Activated CD4-positive, alpha-beta T cell treated with anti-CD3 and anti-CD28 coated beads for 36 hours (primary cell): ENCODE measurements at regions of chr1 and their contacts with region 1.

Region 1: GRCh38 chr1:246506674-246507481 is at the start of gene SMYD3:
- DNase-seq: peak; percentile 84
- ATAC-seq: peak; percentile 93
- H3K4me3 Mint-ChIP-seq: peak within 1 kb of the TSS; percentile 78
- H3K27ac Mint-ChIP-seq: peak within 1 kb of the TSS; percentile 89
- H3K4me1 Mint-ChIP-seq: peaks cover 26% of the 10 kb centered on the region
- H3K27me3 Mint-ChIP-seq: no peaks in the 10 kb centered on the region
- total RNA-seq, gene SMYD3: 17.2 to 18.4 TPM

Region 2: DNA sequence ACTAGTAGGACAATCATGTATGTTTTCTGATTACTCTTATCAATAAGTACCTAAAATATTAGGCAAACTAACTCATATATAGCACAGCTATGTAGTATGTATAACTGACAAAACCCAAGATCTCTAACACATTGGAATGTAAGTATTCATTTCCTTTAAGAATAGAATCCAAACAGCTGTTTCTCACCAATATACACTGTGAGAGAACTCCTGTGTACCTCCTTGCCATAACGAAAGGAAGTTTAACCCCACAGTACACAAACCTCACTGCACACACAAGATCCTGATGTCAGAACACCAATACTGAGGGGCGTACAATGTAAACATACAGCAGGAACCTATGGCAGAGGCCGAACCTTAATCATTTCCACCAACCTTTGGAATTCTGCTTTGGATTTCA is 112.8 kb before region 1 on chr1:
- CTCF ChIA-PET with region 1: no interaction called
- POLR2A ChIA-PET with region 1: no interaction called
- intact Hi-C with region 1: no loop called
- DNase-seq: no peak
- ATAC-seq: no peak
- H3K4me3 Mint-ChIP-seq: no peak overlapping the region
- H3K27ac Mint-ChIP-seq: no peak overlapping the region
- H3K4me1 Mint-ChIP-seq: no peaks in the 10 kb centered on the region
- H3K27me3 Mint-ChIP-seq: no peaks in the 10 kb centered on the region

Region 3: DNA sequence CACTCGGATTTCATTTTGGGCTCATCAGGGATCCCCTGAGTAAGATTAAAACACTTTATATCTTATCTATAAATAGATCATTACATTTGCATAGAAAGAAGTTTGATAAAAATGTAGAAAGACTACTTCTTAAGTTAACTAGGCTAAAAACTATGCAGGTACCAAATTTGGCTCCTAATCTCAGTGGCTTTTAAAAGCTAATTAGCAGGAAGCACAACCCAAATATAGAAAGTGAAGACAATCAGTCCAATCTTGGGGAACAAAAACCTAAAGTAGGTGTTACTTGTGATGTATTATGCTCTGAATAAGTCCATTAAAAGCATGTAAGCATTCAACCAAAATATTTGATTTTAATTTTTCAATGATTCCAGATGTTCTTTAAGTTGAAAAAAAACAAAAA is 35.2 kb before region 1 on chr1:
- CTCF ChIA-PET with region 1: no interaction called
- POLR2A ChIA-PET with region 1: no interaction called
- intact Hi-C with region 1: no loop called
- DNase-seq: no peak
- ATAC-seq: no peak
- H3K4me3 Mint-ChIP-seq: no peak overlapping the region
- H3K27ac Mint-ChIP-seq: no peak overlapping the region
- H3K4me1 Mint-ChIP-seq: peaks cover 10% of the 10 kb centered on the region
- H3K27me3 Mint-ChIP-seq: no peaks in the 10 kb centered on the region

Region 4: GRCh38 chr1:246724016-246724730 is 217.3 kb after region 1 on chr1 and contains the start of gene SCCPDH:
- CTCF ChIA-PET with region 1: no interaction called
- POLR2A ChIA-PET with region 1: no interaction called
- intact Hi-C with region 1: loop called in 1 of 2 experiments (anchors 1 kb)
- DNase-seq: peak; percentile 84
- ATAC-seq: peak; percentile 96
- H3K4me3 Mint-ChIP-seq: peak within 1 kb of the TSS; percentile 83
- H3K27ac Mint-ChIP-seq: peak within 1 kb of the TSS; percentile 84
- H3K4me1 Mint-ChIP-seq: peaks cover 8% of the 10 kb centered on the region
- H3K27me3 Mint-ChIP-seq: no peaks in the 10 kb centered on the region
- total RNA-seq, gene SCCPDH: 17.1 to 28.6 TPM

Region 5: DNA sequence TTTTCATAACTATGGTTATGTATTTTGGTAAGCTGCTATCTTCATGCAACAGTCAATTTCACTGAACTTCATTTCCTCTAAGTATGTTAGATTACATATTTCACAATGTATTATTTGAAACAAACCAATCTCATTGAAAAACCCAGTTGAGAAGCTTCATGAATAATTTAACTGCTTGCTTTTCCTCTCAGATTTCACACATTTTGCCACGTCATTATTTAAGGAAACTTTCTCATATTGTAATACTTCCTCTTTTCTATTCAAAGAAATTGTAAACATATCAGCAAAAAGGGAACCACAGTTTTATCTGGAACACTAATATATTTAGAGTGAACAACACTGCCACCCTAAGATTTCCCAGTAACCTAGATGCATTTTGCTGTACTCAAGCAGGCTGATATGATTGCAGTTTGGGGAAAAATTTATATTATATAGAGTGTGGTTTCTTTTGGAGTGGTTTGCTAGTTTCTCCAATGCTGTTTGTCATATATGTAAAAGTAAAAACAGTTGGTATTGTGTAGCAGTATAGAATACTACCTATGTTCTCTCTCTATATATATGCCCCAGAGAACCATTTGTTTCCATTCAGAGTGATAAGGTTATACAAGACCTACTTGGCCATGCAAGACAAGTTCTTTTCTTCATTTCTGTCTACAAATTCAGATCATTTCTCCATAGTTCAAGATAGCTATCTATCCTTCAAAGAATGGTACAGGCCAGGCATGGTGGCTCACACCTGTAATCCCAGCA is 453.2 kb after region 1 on chr1:
- CTCF ChIA-PET with region 1: no interaction called
- POLR2A ChIA-PET with region 1: no interaction called
- intact Hi-C with region 1: no loop called
- DNase-seq: no peak
- ATAC-seq: peak; percentile 57
- H3K4me3 Mint-ChIP-seq: no peak overlapping the region
- H3K27ac Mint-ChIP-seq: peak overlapping the region; percentile 69
- H3K4me1 Mint-ChIP-seq: peaks cover 6% of the 10 kb centered on the region
- H3K27me3 Mint-ChIP-seq: peaks cover 3% of the 10 kb centered on the region